ENCODE measurements at regions of chr19 and their contacts with region 1.

Region 1: GRCh38 chr19:58228585-58229254 is at the start of gene ZNF544:
- DNase-seq: peak in 13 of 14 experiments; percentile 7 to 67 (median 45)
- ATAC-seq: peak; percentile 79
- H3K4me3 ChIP-seq: peak within 1 kb of the TSS; percentile 85
- H3K4me3 Mint-ChIP-seq: peak within 1 kb of the TSS; percentile 97
- H3K27ac ChIP-seq: peak within 1 kb of the TSS; percentile 47 to 63
- H3K27ac Mint-ChIP-seq: peak within 1 kb of the TSS; percentile 80
- H3K4me1 ChIP-seq: peaks cover 22% of the 10 kb centered on the region
- H3K4me1 Mint-ChIP-seq: peaks cover 46% of the 10 kb centered on the region
- H3K27me3 ChIP-seq: no peaks in the 10 kb centered on the region
- H3K27me3 Mint-ChIP-seq: no peaks in the 10 kb centered on the region
- CTCF ChIP-seq: no peak
- total RNA-seq, gene ZNF544: 6.3 to 7.2 TPM

Region 2: GRCh38 chr19:58217069-58217481 is 11.6 kb before region 1 on chr19:
- CTCF ChIA-PET with region 1: no interaction called
- POLR2A ChIA-PET with region 1: no interaction called
- intact Hi-C with region 1: no loop called
- DNase-seq: no peak
- ATAC-seq: no peak
- H3K4me3 ChIP-seq: no peak overlapping the region
- H3K4me3 Mint-ChIP-seq: no peak overlapping the region
- H3K27ac ChIP-seq: no peak overlapping the region
- H3K27ac Mint-ChIP-seq: no peak overlapping the region
- H3K4me1 ChIP-seq: no peaks in the 10 kb centered on the region
- H3K4me1 Mint-ChIP-seq: no peaks in the 10 kb centered on the region
- H3K27me3 ChIP-seq: peaks cover 0 to 5% of the 10 kb centered on the region in 2 experiments
- H3K27me3 Mint-ChIP-seq: no peaks in the 10 kb centered on the region
- CTCF ChIP-seq: no peak

Region 3: DNA sequence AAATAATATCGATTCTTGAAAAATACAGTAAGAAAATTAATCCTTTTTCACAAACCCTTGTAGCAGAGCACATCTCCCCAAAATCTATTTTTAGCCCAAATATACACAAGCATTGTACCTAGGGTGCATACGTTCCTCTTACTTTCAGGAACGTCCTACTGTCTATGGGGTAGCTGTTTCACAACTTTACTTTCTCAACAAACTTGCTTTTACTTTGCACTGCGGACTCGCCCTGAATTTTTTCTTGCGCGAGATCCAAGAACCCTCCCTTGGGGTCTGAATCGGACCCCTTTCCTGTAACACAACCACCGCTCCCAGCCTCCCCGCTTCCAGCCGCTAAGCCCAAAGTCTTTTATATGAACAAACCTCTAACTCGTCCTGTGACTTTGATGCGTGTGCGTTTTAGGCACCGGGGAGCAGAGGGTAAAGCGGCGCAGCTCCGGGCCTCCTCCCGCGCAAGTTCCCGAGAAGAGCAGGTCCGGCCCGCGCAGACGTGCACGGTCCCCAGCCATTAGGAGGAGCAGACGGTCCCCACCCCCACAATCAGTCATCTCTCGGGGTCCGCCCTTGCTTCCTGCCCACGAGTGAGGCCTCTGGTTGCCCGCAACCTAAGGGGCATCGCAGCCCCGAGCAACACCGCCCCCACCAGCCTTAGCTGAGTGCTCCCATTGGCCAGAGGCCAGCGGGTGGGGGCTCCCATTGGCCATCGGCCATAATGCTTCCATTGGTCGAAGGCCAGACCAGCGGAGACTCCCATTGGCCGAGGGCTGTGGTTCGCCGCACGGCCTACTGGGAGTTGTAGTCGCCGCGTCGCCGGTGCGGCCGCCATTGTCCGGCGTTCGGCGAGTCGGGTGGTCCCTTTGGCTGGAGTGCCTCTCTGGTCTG is 49.7 kb after region 1 on chr19 and contains the start of gene ZNF8:
- CTCF ChIA-PET with region 1: interaction called, 5 read pairs
- POLR2A ChIA-PET with region 1: interaction called, 3 read pairs
- intact Hi-C with region 1: loop called (anchors 5 to 10 kb)
- DNase-seq: peak; percentile 89 to 99 (median 96)
- ATAC-seq: peak; percentile 96
- H3K4me3 ChIP-seq: peak within 1 kb of the TSS; percentile 89
- H3K4me3 Mint-ChIP-seq: peak within 1 kb of the TSS; percentile 98
- H3K27ac ChIP-seq: peak within 1 kb of the TSS; percentile 81 to 85
- H3K27ac Mint-ChIP-seq: peak within 1 kb of the TSS; percentile 92
- H3K4me1 ChIP-seq: peaks cover 29% of the 10 kb centered on the region
- H3K4me1 Mint-ChIP-seq: peaks cover 45% of the 10 kb centered on the region
- H3K27me3 ChIP-seq: no peaks in the 10 kb centered on the region
- H3K27me3 Mint-ChIP-seq: no peaks in the 10 kb centered on the region
- CTCF ChIP-seq: no peak
- total RNA-seq, gene ZNF8: 9.5 to 9.6 TPM